ENCODE measurements at regions of chr6 and their contacts with region 1.

Region 1: DNA sequence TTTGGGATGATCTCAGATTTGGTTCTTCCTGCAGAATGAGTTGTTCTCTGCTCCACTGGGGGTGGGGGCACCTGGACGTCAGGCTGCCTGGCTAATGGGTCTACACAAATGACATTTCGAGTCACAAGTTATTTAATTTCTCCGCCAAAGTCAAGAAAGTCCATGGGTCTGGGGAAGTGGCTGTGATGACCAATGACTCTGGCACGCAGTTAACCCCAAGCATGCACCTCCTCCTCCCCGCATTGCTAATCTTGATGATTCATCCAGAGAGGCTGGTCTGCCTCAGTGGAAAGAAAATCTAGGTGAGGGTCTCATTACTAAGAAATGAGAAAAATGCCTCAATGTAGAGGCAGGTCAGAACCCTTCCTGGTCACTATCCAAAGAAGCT is 98.3 kb upstream of the MRPS10 start:
- DNase-seq: peak in 1 of 2 donors; percentile 77
- ATAC-seq: peak; percentile 63
- H3K4me3 ChIP-seq: no peak overlapping the region
- H3K27ac ChIP-seq: peak overlapping the region; percentile 52 to 59
- H3K4me1 ChIP-seq: no peaks in the 10 kb centered on the region
- H3K27me3 ChIP-seq: no peaks in the 10 kb centered on the region

Region 2: GRCh38 chr6:42239351-42240055 is 76.5 kb before region 1 on chr6:
- intact Hi-C with region 1: no loop called
- DNase-seq: peak in 1 of 2 donors; percentile 67
- ATAC-seq: peak; percentile 48
- H3K4me3 ChIP-seq: no peak overlapping the region
- H3K27ac ChIP-seq: no peak overlapping the region
- H3K4me1 ChIP-seq: no peaks in the 10 kb centered on the region
- H3K27me3 ChIP-seq: no peaks in the 10 kb centered on the region

Region 3: GRCh38 chr6:42453031-42453653 is 137.2 kb after region 1 on chr6:
- intact Hi-C with region 1: loop called in 1 of 2 experiments (anchors 5 kb)
- DNase-seq: peak; percentile 93 to 94
- ATAC-seq: peak; percentile 94
- H3K4me3 ChIP-seq: peak overlapping the region; percentile 66 to 84
- H3K27ac ChIP-seq: peak overlapping the region; percentile 2 to 23
- H3K4me1 ChIP-seq: no peaks in the 10 kb centered on the region
- H3K27me3 ChIP-seq: no peaks in the 10 kb centered on the region